IMR-90 (cell line): ENCODE measurements at regions of chr2 and their contacts with region 1.

Region 1: DNA sequence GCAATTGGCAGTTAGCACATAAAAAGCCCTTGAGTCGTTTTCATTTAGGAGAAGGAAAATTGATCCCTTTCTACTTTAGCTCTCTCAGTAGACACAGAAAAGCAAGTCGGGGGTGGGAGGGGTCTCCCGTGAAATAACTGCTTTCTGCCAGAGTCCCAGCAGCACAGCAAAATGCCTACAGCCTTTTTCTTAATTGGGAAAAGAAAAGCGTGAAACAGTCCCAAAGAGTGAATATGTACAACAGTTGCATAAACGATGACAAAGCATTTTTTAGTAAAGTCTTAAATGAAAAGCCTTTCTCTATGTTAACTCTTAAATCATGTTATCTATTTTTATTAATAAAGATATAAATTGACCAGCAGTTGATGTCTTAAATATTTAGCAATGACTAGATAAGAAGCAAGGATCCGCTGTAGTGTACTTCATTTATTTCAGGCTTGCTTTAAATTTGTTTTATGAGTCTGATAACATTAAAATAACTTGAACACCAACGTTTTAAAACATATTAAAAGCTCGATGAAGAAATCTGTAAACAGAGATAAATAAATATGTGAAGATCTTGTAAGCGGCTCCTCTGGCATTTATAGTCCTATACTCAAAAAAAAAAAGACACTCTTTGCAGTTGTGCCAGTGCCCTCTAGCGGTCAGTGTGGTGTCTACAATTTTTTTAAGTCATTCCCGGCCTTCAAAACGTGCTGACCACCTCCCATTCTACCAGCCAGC is 42.3 kb upstream of the ATIC start:
- DNase-seq: peak; percentile 80
- ATAC-seq: peak; percentile 85
- H3K4me3 ChIP-seq: no peak overlapping the region
- H3K27ac ChIP-seq: no peak overlapping the region
- H3K4me1 ChIP-seq: no peaks in the 10 kb centered on the region
- H3K27me3 ChIP-seq: no peaks in the 10 kb centered on the region
- CTCF ChIP-seq: peak; percentile 78
- POLR2A ChIP-seq: no peak
- RAD21 ChIP-seq: peak; percentile 70

Region 2: DNA sequence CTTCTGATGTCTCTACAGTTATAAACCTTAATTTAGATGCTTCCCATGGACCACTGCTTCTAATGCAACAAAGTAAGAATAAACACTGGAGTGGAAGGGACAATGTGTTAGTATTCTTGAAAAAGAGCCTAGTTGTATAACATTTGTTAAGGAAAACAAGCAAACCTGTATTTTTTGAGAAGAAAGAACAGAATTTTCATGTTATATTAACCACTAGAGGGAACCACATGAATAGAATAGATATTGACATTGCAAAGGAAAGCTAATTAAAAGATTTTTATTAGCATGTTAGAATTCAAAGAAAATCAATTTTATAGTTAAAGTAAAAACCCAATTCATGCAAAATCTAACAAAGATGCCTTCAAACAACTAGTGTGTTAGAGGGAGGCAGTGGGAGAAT is 308.9 kb before region 1 on chr2:
- CTCF ChIA-PET with region 1: no interaction called
- POLR2A ChIA-PET with region 1: no interaction called
- dilution Hi-C with region 1: no loop called
- in situ Hi-C with region 1: no loop called
- intact Hi-C with region 1: loop called (anchors 5 kb)
- DNase-seq: peak; percentile 1
- ATAC-seq: no peak
- H3K4me3 ChIP-seq: no peak overlapping the region
- H3K27ac ChIP-seq: no peak overlapping the region
- H3K4me1 ChIP-seq: no peaks in the 10 kb centered on the region
- H3K27me3 ChIP-seq: no peaks in the 10 kb centered on the region; the same call in 1 of the 2 replicates
- CTCF ChIP-seq: peak; percentile 28; the same call in 1 of the 2 replicates
- POLR2A ChIP-seq: no peak
- RAD21 ChIP-seq: peak; percentile 39

Region 3: GRCh38 chr2:215347878-215348277 is 78.3 kb after region 1 on chr2:
- CTCF ChIA-PET with region 1: interaction called, 11 read pairs
- POLR2A ChIA-PET with region 1: no interaction called
- dilution Hi-C with region 1: no loop called
- in situ Hi-C with region 1: no loop called
- intact Hi-C with region 1: no loop called
- DNase-seq: no peak
- ATAC-seq: no peak
- H3K4me3 ChIP-seq: no peak overlapping the region
- H3K27ac ChIP-seq: no peak overlapping the region
- H3K4me1 ChIP-seq: no peaks in the 10 kb centered on the region
- H3K27me3 ChIP-seq: no peaks in the 10 kb centered on the region
- CTCF ChIP-seq: no peak
- POLR2A ChIP-seq: no peak
- RAD21 ChIP-seq: no peak

Region 4: GRCh38 chr2:215931256-215931903 is 661.8 kb after region 1 on chr2:
- CTCF ChIA-PET with region 1: no interaction called
- POLR2A ChIA-PET with region 1: no interaction called
- dilution Hi-C with region 1: no loop called
- in situ Hi-C with region 1: no loop called
- intact Hi-C with region 1: loop called (anchors 10 kb)
- DNase-seq: peak; percentile 83
- ATAC-seq: peak; percentile 94
- H3K4me3 ChIP-seq: no peak overlapping the region
- H3K27ac ChIP-seq: no peak overlapping the region
- H3K4me1 ChIP-seq: peaks cover 8% of the 10 kb centered on the region
- H3K27me3 ChIP-seq: no peaks in the 10 kb centered on the region
- CTCF ChIP-seq: peak; percentile 97
- POLR2A ChIP-seq: peak; percentile 59; the same call in 1 of the 2 replicates
- RAD21 ChIP-seq: peak; percentile 98